Naive thymus-derived CD4-positive, alpha-beta T cell (primary cell): ENCODE measurements at regions of chr12 and their contacts with region 1.

Region 1: GRCh38 chr12:94149119-94149780 is 873 bp downstream of the PLXNC1 start:
- DNase-seq: peak; percentile 23 to 70 (median 45)
- ATAC-seq: peak; percentile 51
- H3K4me3 ChIP-seq: peak overlapping the region; percentile 75
- H3K4me3 Mint-ChIP-seq: peak overlapping the region; percentile 76 to 97 (median 93)
- H3K27ac ChIP-seq: peak overlapping the region; percentile 17
- H3K27ac Mint-ChIP-seq: peak overlapping the region in 3 of 9 donors; percentile 51 to 67 (median 63)
- H3K4me1 ChIP-seq: peaks cover 0 to 17% of the 10 kb centered on the region in 2 donors
- H3K4me1 Mint-ChIP-seq: peaks cover 18 to 53% (median 39%) of the 10 kb centered on the region in 7 donors
- H3K27me3 ChIP-seq: no peaks in the 10 kb centered on the region
- H3K27me3 Mint-ChIP-seq: peaks cover 0 to 31% (median 0%) of the 10 kb centered on the region in 5 donors

Region 2: GRCh38 chr12:93467351-93468007 is 681.8 kb before region 1 on chr12 and contains the start of gene MRPL42:
- CTCF ChIA-PET with region 1: no interaction called
- POLR2A ChIA-PET with region 1: no interaction called
- intact Hi-C with region 1: loop called in 1 of 2 experiments (anchors 1 kb)
- DNase-seq: peak; percentile 86 to 96 (median 94)
- ATAC-seq: peak; percentile 97
- H3K4me3 ChIP-seq: peak within 1 kb of the TSS; percentile 94
- H3K4me3 Mint-ChIP-seq: peak within 1 kb of the TSS; percentile 85 to 96 (median 93)
- H3K27ac ChIP-seq: peak within 1 kb of the TSS; percentile 85
- H3K27ac Mint-ChIP-seq: peak within 1 kb of the TSS; percentile 90 to 98 (median 95)
- H3K4me1 ChIP-seq: peaks cover 8 to 10% of the 10 kb centered on the region in 2 donors
- H3K4me1 Mint-ChIP-seq: peaks cover 28 to 48% (median 36%) of the 10 kb centered on the region in 7 donors
- H3K27me3 ChIP-seq: no peaks in the 10 kb centered on the region
- H3K27me3 Mint-ChIP-seq: no peaks in the 10 kb centered on the region
- total RNA-seq, gene MRPL42: 30.1 to 65.8 (median 45.6) TPM

Region 3: GRCh38 chr12:93902736-93903562 is 246.3 kb before region 1 on chr12:
- CTCF ChIA-PET with region 1: no interaction called
- POLR2A ChIA-PET with region 1: no interaction called
- intact Hi-C with region 1: no loop called
- DNase-seq: no peak
- ATAC-seq: no peak
- H3K4me3 ChIP-seq: no peak overlapping the region
- H3K4me3 Mint-ChIP-seq: no peak overlapping the region
- H3K27ac ChIP-seq: no peak overlapping the region
- H3K27ac Mint-ChIP-seq: peak overlapping the region in 2 of 9 donors; percentile 28 to 51
- H3K4me1 ChIP-seq: peaks cover 0 to 15% of the 10 kb centered on the region in 2 donors
- H3K4me1 Mint-ChIP-seq: peaks cover 11 to 60% (median 27%) of the 10 kb centered on the region in 7 donors
- H3K27me3 ChIP-seq: no peaks in the 10 kb centered on the region
- H3K27me3 Mint-ChIP-seq: no peaks in the 10 kb centered on the region

Region 4: DNA sequence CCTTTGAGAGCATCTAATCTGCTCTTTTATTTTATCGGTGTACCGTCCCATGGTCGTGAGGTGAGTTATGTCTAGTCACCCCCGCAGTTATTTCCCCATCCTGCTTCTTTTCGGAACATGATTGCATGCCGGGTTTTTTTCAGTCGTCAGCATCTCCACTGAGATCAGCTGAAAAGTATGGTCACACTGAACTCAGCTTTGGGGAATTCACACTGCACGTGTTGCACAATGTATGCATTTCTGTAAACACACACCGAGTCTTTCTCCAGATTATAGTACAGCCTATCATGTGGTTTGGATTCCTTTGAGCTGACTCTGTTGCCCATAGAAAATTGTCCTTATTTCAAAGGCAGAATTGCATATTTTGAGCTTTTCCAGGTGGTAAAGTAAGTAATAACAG is 23.7 kb after region 1 on chr12:
- CTCF ChIA-PET with region 1: no interaction called
- POLR2A ChIA-PET with region 1: no interaction called
- intact Hi-C with region 1: loop called in 1 of 2 experiments (anchors 2 kb)
- DNase-seq: no peak
- ATAC-seq: peak; percentile 58
- H3K4me3 ChIP-seq: no peak overlapping the region
- H3K4me3 Mint-ChIP-seq: no peak overlapping the region
- H3K27ac ChIP-seq: no peak overlapping the region
- H3K27ac Mint-ChIP-seq: peak overlapping the region in 1 of 9 donors; percentile 36
- H3K4me1 ChIP-seq: peaks cover 14 to 27% of the 10 kb centered on the region in 2 donors
- H3K4me1 Mint-ChIP-seq: peaks cover 39 to 67% (median 59%) of the 10 kb centered on the region in 7 donors
- H3K27me3 ChIP-seq: no peaks in the 10 kb centered on the region
- H3K27me3 Mint-ChIP-seq: peaks cover 0 to 3% (median 0%) of the 10 kb centered on the region in 5 donors

Region 5: DNA sequence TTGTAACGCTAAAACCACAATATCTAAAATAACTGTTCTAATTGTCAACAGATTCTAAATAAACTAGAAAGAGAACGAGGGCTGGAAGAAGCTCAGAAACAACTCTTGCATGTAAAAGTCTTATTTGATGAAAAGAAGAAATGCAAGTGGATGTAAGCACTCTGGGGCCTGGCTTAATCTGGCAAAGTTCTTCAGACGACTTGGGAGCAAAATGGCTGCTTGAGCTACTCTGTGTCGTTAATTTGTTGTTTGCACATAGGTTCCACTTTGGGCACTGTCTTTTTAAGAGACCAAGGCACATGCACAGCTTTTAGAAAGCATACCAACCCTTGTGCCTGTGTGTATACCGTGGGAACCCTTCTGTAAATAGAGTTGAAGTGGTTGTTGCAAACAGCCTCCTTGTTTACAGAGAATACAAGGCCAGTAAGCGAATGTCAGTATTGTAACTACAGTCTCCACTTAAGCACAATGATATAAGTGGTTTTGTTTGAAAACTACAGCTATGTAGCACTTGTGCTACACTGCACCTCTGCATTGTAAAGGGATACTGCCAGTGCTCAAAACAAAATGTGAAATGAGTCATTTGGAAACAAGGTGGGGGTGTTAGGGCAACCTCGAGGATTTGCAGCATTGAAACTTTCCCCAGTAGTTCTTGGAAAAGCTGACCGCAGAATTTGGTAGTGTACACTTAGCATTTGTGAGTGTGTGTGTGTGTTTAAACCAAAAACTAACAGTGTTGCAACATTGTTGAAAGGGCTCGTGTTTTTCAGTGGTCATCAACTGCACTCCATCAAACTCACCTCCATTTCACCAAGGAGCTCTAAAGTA is 156.1 kb after region 1 on chr12:
- CTCF ChIA-PET with region 1: interaction called, 3 read pairs
- POLR2A ChIA-PET with region 1: no interaction called
- intact Hi-C with region 1: loop called in 1 of 2 experiments (anchors 1 kb)
- DNase-seq: peak in 1 of 9 donors; percentile 69
- ATAC-seq: no peak
- H3K4me3 ChIP-seq: no peak overlapping the region
- H3K4me3 Mint-ChIP-seq: peak overlapping the region in 1 of 10 donors; percentile 70
- H3K27ac ChIP-seq: no peak overlapping the region
- H3K27ac Mint-ChIP-seq: peak overlapping the region in 1 of 9 donors; percentile 87
- H3K4me1 ChIP-seq: no peaks in the 10 kb centered on the region
- H3K4me1 Mint-ChIP-seq: peaks cover 0 to 57% (median 0%) of the 10 kb centered on the region in 7 donors
- H3K27me3 ChIP-seq: no peaks in the 10 kb centered on the region
- H3K27me3 Mint-ChIP-seq: no peaks in the 10 kb centered on the region

Region 6: GRCh38 chr12:94649349-94650142 is 500.3 kb after region 1 on chr12:
- CTCF ChIA-PET with region 1: no interaction called
- POLR2A ChIA-PET with region 1: no interaction called
- intact Hi-C with region 1: loop called in 1 of 2 experiments (anchors 10 kb)
- DNase-seq: peak in 7 of 9 donors; percentile 21 to 48 (median 31)
- ATAC-seq: peak; percentile 80
- H3K4me3 ChIP-seq: peak overlapping the region; percentile 37
- H3K4me3 Mint-ChIP-seq: peak overlapping the region; percentile 65 to 85 (median 83)
- H3K27ac ChIP-seq: no peak overlapping the region
- H3K27ac Mint-ChIP-seq: no peak overlapping the region
- H3K4me1 ChIP-seq: no peaks in the 10 kb centered on the region
- H3K4me1 Mint-ChIP-seq: peaks cover 9 to 19% (median 16%) of the 10 kb centered on the region in 7 donors
- H3K27me3 ChIP-seq: peaks cover 3 to 10% of the 10 kb centered on the region in 2 donors
- H3K27me3 Mint-ChIP-seq: peaks cover 49 to 81% (median 56%) of the 10 kb centered on the region in 5 donors

Region 7: DNA sequence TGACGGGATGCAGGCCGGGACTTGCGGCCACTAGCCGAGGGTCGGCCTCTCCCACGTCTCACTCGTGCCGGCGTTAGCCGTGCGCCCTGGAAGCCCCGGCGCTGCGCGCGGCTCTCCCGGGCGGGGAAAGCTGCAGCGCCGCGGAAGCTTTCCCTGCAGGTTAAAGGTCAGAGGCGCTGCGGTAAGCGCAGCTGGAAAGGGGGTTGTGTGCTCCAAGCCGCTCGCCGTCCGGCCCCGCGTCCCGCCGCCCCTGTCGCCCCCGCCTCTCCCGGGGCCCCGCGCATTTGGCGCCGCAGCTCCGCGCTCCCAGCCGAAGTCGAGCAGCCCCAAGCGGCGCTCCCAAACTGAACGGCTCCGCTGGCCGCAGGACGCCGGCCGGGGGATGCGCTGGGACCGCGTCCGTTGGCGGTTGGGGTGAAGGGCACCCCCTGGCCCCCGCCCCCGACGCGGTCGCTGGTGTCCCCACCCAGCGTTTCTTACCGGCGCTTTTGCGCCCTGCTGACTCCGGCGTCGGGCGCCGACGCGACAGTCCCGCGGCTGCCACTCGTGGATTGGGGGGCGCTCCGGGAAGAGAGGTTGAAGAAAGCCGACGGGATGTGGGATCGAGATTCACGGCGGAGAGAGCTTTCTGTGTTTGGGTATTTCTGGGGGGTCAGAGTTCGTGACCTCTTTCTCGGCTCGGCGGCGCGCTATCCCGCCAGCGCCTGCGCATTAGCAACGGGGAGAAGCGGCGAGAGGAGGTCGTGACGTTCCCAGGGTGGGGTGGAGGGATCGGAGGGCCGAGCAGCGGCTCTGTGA is 923.8 kb after region 1 on chr12 and contains the start of gene NR2C1:
- CTCF ChIA-PET with region 1: no interaction called
- POLR2A ChIA-PET with region 1: no interaction called
- intact Hi-C with region 1: loop called in 1 of 2 experiments (anchors 5 kb)
- DNase-seq: peak; percentile 76 to 95 (median 92)
- ATAC-seq: peak; percentile 98
- H3K4me3 ChIP-seq: peak within 1 kb of the TSS; percentile 81
- H3K4me3 Mint-ChIP-seq: peak within 1 kb of the TSS; percentile 92 to 98 (median 94)
- H3K27ac ChIP-seq: peak within 1 kb of the TSS; percentile 81
- H3K27ac Mint-ChIP-seq: peak within 1 kb of the TSS; percentile 84 to 96 (median 93)
- H3K4me1 ChIP-seq: peaks cover 0 to 9% of the 10 kb centered on the region in 2 donors
- H3K4me1 Mint-ChIP-seq: peaks cover 8 to 40% (median 30%) of the 10 kb centered on the region in 7 donors
- H3K27me3 ChIP-seq: no peaks in the 10 kb centered on the region
- H3K27me3 Mint-ChIP-seq: peaks cover 0 to 5% (median 0%) of the 10 kb centered on the region in 5 donors
- total RNA-seq, gene NR2C1: 30.5 to 66.8 (median 58.7) TPM